CD8-positive, alpha-beta T cell (primary cell): ENCODE measurements at regions of chr14 and their contacts with region 1.

Region 1: DNA sequence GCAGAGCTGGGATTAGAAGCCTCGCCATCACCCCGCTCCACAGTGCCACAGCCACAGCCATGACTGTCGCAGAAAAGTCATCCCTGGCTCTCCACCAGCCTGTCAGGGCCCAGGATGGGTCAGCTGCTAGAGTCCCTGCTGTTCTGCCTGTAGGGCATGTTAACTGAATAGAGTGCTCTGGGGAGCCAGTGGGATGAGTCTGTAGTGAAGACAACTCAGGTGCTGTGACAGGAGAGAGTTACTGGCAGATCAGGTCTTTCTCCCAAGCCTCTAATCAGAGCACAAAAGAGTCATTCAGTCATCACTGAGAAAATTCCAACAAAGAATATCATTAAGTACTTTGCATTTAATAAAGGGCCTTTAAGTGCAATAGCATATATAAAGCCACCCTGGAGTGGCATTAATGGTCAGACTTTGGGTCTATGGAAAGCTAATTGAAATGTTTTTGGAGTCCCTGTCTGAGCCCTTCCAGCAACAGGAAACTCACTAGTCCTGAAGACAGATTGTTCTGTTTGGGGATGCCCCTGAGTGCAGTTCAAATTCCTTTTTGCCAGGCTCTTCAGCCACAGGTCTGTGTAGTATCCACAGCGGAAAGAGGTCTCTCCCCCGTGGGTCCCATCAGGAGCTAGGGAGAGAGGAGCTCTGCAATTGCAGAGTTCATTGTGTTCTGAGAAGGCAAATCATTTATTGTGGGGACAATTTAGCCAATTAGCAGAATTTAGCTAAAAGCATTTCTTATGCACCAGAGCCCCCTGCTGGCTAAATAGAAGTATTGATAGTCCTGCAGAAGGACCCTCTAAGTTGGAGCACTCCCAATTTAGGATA is 45.2 kb upstream of the C14orf132 start:
- DNase-seq: peak in 4 of 9 experiments; percentile 20 to 57 (median 34)
- ATAC-seq: no peak
- H3K4me3 ChIP-seq: no peak overlapping the region
- H3K4me3 Mint-ChIP-seq: no peak overlapping the region
- H3K27ac ChIP-seq: no peak overlapping the region
- H3K27ac Mint-ChIP-seq: no peak overlapping the region
- H3K4me1 ChIP-seq: no peaks in the 10 kb centered on the region
- H3K4me1 Mint-ChIP-seq: no peaks in the 10 kb centered on the region
- H3K27me3 ChIP-seq: peaks cover 4 to 8% of the 10 kb centered on the region in 2 experiments
- H3K27me3 Mint-ChIP-seq: peaks cover 31% of the 10 kb centered on the region
- CTCF ChIP-seq: peak; percentile 78

Region 2: DNA sequence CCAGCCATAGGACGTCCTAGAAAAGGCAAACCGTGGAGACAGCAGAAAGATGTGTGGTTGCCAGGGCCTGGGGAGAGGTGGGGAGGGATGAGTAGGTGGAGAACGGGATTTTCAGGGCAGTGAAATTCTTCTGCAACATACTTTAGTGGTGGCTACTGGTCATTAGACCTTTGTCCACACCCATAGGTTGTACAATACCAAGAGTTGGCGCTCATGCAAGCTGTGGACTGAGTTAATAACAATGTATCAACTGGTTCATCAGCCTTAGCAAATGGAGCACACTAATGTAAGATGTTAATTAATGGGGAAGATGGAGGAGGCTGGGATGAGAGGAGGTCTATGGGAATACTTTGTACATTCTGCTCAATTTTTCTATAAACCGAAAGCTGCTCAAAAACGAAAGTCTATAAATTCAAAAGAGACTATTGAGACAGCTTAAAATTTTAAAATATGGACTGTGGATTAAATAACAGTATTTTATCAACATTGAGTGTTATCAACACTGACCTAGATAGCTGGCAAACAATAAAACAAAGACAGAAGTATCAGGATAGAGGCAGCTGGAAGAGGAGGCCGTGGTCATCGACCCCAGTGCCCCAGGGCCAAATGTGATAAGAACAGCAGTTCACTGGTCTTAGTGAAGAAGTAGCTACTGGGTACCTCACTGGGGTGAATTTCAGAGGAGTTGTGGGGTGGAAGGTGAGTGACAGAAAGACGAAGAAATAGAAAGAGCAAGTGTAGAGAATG is 568.4 kb before region 1 on chr14:
- CTCF ChIA-PET with region 1: no interaction called
- POLR2A ChIA-PET with region 1: no interaction called
- intact Hi-C with region 1: loop called (anchors 2 to 5 kb)
- DNase-seq: no peak
- ATAC-seq: no peak
- H3K4me3 ChIP-seq: no peak overlapping the region
- H3K4me3 Mint-ChIP-seq: no peak overlapping the region
- H3K27ac ChIP-seq: no peak overlapping the region
- H3K27ac Mint-ChIP-seq: no peak overlapping the region
- H3K4me1 ChIP-seq: no peaks in the 10 kb centered on the region
- H3K4me1 Mint-ChIP-seq: peaks cover 3% of the 10 kb centered on the region
- H3K27me3 ChIP-seq: no peaks in the 10 kb centered on the region
- H3K27me3 Mint-ChIP-seq: no peaks in the 10 kb centered on the region
- CTCF ChIP-seq: no peak

Region 3: DNA sequence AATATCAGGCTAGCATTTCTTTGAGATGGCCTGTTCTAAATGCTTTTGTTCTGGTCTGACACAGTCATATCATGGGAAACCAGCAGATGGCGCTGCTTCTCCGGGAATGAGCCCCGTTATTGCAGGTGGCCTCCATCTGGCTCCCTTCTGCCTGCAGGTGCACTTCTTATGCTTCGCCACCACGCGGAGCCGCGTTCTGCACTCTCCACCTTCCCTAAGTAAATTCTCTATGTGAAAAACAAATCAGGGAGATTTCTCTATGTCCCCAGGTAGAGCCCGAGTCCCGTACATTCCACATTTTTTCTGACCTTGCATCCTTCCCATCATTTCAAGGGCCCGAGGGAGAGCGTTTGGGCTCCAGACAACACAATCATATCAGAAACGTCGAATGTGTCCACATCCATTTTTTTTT is 433.0 kb before region 1 on chr14:
- CTCF ChIA-PET with region 1: interaction called, 9 read pairs
- POLR2A ChIA-PET with region 1: no interaction called
- intact Hi-C with region 1: loop called in 1 of 2 experiments (anchors 1 kb)
- DNase-seq: peak; percentile 62 to 88 (median 84)
- ATAC-seq: peak; percentile 88
- H3K4me3 ChIP-seq: no peak overlapping the region
- H3K4me3 Mint-ChIP-seq: no peak overlapping the region
- H3K27ac ChIP-seq: no peak overlapping the region
- H3K27ac Mint-ChIP-seq: no peak overlapping the region
- H3K4me1 ChIP-seq: no peaks in the 10 kb centered on the region
- H3K4me1 Mint-ChIP-seq: peaks cover 4% of the 10 kb centered on the region
- H3K27me3 ChIP-seq: no peaks in the 10 kb centered on the region
- H3K27me3 Mint-ChIP-seq: peaks cover 5% of the 10 kb centered on the region
- CTCF ChIP-seq: peak; percentile 86

Region 4: GRCh38 chr14:95915323-95915722 is 78.7 kb before region 1 on chr14:
- CTCF ChIA-PET with region 1: no interaction called
- POLR2A ChIA-PET with region 1: no interaction called
- intact Hi-C with region 1: no loop called
- DNase-seq: no peak
- ATAC-seq: no peak
- H3K4me3 ChIP-seq: no peak overlapping the region
- H3K4me3 Mint-ChIP-seq: no peak overlapping the region
- H3K27ac ChIP-seq: no peak overlapping the region
- H3K27ac Mint-ChIP-seq: no peak overlapping the region
- H3K4me1 ChIP-seq: no peaks in the 10 kb centered on the region
- H3K4me1 Mint-ChIP-seq: no peaks in the 10 kb centered on the region
- H3K27me3 ChIP-seq: no peaks in the 10 kb centered on the region
- H3K27me3 Mint-ChIP-seq: peaks cover 19% of the 10 kb centered on the region
- CTCF ChIP-seq: no peak

Region 5: GRCh38 chr14:95981965-95982719 is 11.8 kb before region 1 on chr14:
- CTCF ChIA-PET with region 1: interaction called, 21 read pairs
- POLR2A ChIA-PET with region 1: no interaction called
- intact Hi-C with region 1: no loop called
- DNase-seq: no peak
- ATAC-seq: no peak
- H3K4me3 ChIP-seq: no peak overlapping the region
- H3K4me3 Mint-ChIP-seq: no peak overlapping the region
- H3K27ac ChIP-seq: no peak overlapping the region
- H3K27ac Mint-ChIP-seq: no peak overlapping the region
- H3K4me1 ChIP-seq: no peaks in the 10 kb centered on the region
- H3K4me1 Mint-ChIP-seq: no peaks in the 10 kb centered on the region
- H3K27me3 ChIP-seq: no peaks in the 10 kb centered on the region
- H3K27me3 Mint-ChIP-seq: peaks cover 40% of the 10 kb centered on the region
- CTCF ChIP-seq: no peak

Region 6: DNA sequence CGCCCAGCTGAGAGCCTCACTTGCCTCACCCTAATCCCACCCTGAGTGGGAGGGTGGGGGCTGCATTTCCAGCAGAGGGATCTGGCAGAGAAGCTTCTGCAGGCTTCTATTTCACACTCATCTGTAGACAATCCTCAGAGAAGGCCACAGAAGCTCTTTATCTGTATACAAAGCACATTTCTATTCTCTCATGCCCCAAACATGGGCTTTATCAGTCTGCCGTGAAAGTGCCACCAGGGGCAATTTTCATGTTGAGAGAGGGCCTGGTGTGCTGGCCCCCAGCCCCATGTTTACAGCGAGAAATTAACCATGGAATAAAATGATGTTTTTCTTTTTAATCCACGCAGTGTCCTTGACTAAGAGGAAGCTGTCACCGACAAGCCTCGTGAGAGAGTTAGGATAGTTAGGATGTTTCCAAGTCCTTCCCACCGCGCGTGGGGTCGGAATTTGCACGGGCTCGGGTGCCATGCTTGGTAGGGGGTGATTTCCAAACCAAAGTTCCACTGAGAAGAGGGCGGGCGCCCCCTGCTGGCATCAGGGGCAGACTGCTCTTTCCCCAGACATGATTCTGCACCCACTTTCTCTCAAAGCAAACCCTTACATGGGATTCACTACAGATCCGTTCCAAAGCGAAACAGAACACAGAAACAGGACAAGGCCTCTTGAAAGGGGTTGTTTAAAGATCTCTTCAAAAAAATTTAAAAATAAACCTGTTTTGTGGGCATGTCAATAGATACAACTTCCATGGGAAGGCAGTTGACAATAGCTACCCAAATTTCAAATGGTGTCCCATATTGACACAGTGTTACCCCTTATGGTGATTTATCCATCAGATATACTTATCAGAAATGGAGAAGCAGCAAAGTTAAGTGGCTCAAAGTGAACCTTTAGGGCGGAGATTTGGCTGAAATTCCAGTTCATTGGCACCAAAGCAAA is 281.5 kb after region 1 on chr14:
- CTCF ChIA-PET with region 1: no interaction called
- POLR2A ChIA-PET with region 1: no interaction called
- intact Hi-C with region 1: loop called in 1 of 2 experiments (anchors 5 kb)
- DNase-seq: peak; percentile 34 to 74 (median 63)
- ATAC-seq: no peak
- H3K4me3 ChIP-seq: no peak overlapping the region
- H3K4me3 Mint-ChIP-seq: no peak overlapping the region
- H3K27ac ChIP-seq: no peak overlapping the region
- H3K27ac Mint-ChIP-seq: no peak overlapping the region
- H3K4me1 ChIP-seq: no peaks in the 10 kb centered on the region
- H3K4me1 Mint-ChIP-seq: no peaks in the 10 kb centered on the region
- H3K27me3 ChIP-seq: no peaks in the 10 kb centered on the region
- H3K27me3 Mint-ChIP-seq: no peaks in the 10 kb centered on the region
- CTCF ChIP-seq: peak; percentile 81